Heart left ventricle (tissue), 16 donors: ENCODE measurements at regions of chr4 and their contacts with region 1.

Region 1: GRCh38 chr4:100311171-100311570 is 120.9 kb upstream of the DDIT4L start:
- DNase-seq: no peak
- ATAC-seq: no peak
- H3K4me3 ChIP-seq: no peak overlapping the region
- H3K27ac ChIP-seq: no peak overlapping the region
- H3K4me1 ChIP-seq: no peaks in the 10 kb centered on the region
- H3K27me3 ChIP-seq: no peaks in the 10 kb centered on the region
- CTCF ChIP-seq: no peak
- POLR2A ChIP-seq: no peak

Region 2: GRCh38 chr4:100082852-100083251 is 228.3 kb before region 1 on chr4:
- intact Hi-C with region 1: loop called in 1 of 10 experiments (anchors 10 kb)
- DNase-seq: no peak
- ATAC-seq: no peak
- H3K4me3 ChIP-seq: no peak overlapping the region
- H3K27ac ChIP-seq: no peak overlapping the region
- H3K4me1 ChIP-seq: peaks cover 0 to 2% (median 0%) of the 10 kb centered on the region in 12 donors
- H3K27me3 ChIP-seq: peaks cover 0 to 6% (median 0%) of the 10 kb centered on the region in 9 donors
- CTCF ChIP-seq: no peak
- POLR2A ChIP-seq: no peak

Region 3: DNA sequence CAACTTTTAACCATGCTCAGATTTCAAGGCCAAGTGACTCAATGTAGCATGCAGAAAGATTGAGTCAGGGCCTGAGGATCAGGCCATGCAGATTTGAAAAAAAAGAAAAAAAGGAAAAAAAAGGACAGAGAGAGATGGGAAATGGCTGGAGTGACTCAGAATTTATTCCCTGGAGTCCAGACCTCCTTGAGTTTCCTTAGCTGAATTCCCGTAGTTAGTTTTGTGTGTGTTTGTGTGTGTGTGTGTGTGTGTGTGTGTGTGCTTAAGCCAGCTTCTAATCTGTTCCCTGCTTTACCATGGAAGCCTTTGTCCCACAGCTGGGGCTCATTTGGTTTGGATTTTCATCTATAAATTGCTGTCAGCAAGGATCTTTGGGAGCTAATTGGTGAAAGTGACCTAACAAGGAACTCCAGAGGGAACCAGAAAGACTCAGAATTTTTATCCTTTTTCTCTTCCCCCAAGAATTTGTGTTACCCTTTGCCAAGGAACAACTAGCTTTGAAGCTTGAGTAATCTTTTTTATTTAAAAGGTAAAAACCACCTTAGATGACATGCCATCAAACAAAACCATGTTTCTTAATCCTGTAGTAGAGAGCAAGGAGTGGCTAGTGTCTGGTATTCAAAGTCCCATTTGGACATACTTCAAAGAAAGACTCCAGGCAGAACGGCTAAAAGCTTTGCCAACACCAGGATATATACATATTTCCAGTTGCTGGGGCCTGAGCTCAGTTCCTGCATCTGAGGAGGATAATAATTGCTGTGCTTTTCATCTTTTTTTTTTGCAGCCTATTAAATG is 11.9 kb before region 1 on chr4:
- intact Hi-C with region 1: no loop called
- DNase-seq: peak in 4 of 5 donors; percentile 22 to 41 (median 30)
- ATAC-seq: peak; percentile 67 to 95 (median 84)
- H3K4me3 ChIP-seq: no peak overlapping the region
- H3K27ac ChIP-seq: peak overlapping the region in 8 of 12 donors; percentile 3 to 68 (median 38)
- H3K4me1 ChIP-seq: peaks cover 0 to 19% (median 0%) of the 10 kb centered on the region in 12 donors
- H3K27me3 ChIP-seq: no peaks in the 10 kb centered on the region
- CTCF ChIP-seq: no peak
- POLR2A ChIP-seq: no peak